SK-N-SH (cell line): ENCODE measurements at regions of chr5 and their contacts with region 1.

Region 1: DNA sequence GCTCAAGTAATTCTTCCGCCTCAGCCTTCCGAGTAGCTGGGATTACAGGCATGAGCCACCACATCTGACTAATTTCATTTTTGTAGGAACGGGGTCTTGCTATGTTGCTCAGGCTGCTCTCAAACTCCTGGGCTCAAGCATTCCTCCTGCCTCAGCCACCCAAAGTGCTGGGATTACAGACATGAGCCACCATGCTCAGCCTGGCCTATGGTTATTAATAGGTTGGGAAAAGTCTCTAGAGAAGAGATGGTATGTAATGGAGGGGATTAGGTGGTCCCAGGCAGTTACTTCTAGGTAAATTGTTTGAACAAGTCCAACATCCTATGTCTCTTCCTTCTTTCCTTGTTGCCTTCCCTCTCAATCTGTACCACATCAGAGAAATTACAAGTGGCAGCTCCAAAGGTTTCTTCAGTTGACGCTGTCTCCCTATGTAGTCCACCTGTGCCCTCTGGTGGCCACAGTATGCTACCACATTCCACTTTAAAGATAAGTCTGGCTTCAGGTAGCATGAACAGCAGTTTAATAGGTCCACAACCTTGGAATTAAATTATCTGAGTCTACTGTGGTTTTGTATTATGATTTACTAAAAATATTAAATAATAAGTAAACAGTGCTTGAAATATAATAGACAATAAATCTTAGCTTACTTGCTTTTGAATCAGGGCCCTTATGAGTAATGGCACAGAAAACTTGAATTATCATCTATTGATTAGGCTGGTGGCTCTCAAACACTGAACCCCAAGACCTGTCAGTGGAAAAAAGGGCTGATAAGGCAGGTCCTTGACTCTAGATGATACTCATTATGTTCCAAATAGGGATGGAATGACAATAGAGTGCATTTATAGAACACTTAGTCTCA is 9.7 kb downstream of the TIGD6 start:
- DNase-seq: peak; percentile 67
- H3K4me3 ChIP-seq: peak overlapping the region in 1 of 2 experiments; percentile 28; a peak in 1 of 4 replicates
- H3K27ac ChIP-seq: no peak overlapping the region
- H3K4me1 ChIP-seq: peaks cover 9 to 10% of the 10 kb centered on the region in 2 experiments; a peak in 1 of 4 replicates
- H3K27me3 ChIP-seq: no peaks in the 10 kb centered on the region
- CTCF ChIP-seq: peak; percentile 96
- EP300 ChIP-seq: peak in 1 of 2 experiments; percentile 28; a peak in 1 of 4 replicates
- RAD21 ChIP-seq: peak; percentile 98

Region 2: DNA sequence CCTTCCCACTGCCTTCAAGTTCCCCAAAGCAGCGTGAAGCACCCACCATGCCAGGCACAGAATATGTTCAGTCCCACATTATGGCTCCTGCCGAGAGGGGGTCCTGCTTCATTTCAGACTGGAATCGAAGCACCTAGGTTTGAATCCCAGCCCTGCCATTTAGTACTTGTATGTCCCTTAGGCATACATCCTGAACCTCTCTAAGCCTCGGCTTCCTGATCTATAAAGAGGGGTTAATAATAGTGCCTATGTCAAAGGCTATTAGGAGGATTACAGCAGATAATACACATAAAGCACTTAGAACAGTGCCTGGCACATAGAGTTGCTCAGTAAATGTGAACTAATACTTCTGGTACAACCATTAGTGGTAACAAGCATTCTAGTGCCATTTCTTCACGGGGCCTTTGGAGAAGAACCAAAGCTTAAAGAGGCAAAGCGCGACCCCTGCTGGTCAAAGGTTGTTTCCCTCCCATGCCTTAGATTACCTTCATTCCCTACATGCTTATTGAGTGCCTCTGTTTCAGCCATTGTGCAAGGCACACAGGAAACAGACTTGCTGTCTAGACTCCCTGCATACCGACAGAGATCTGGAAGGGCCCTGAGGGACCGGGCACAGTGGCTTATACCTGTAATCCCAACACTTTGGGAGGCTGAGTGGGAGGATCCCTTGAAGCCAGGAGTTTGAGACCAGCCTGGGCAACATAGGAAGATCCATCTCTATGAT is 162.4 kb before region 1 on chr5:
- CTCF ChIA-PET with region 1: interaction called, 506 read pairs
- POLR2A ChIA-PET with region 1: no interaction called
- DNase-seq: peak; percentile 83
- H3K4me3 ChIP-seq: peak overlapping the region in 1 of 2 experiments; percentile 23; a peak in 1 of 4 replicates
- H3K27ac ChIP-seq: no peak overlapping the region
- H3K4me1 ChIP-seq: no peaks in the 10 kb centered on the region; a peak in 1 of 4 replicates
- H3K27me3 ChIP-seq: no peaks in the 10 kb centered on the region
- CTCF ChIP-seq: peak; percentile 91
- EP300 ChIP-seq: no peak
- RAD21 ChIP-seq: peak; percentile 95

Region 3: GRCh38 chr5:149960272-149961185 is 30.2 kb before region 1 on chr5 and contains the start of gene SLC26A2:
- CTCF ChIA-PET with region 1: interaction called, 71 read pairs
- POLR2A ChIA-PET with region 1: no interaction called
- DNase-seq: peak; percentile 96
- H3K4me3 ChIP-seq: peak within 1 kb of the TSS; percentile 73 to 77
- H3K27ac ChIP-seq: peak within 1 kb of the TSS; percentile 87 to 94
- H3K4me1 ChIP-seq: peaks cover 10 to 12% of the 10 kb centered on the region in 2 experiments; a peak in 3 of 4 replicates
- H3K27me3 ChIP-seq: no peaks in the 10 kb centered on the region
- CTCF ChIP-seq: no peak; the same call in 1 of the 2 replicates
- EP300 ChIP-seq: peak in 1 of 2 experiments; percentile 22; a peak in 1 of 4 replicates
- RAD21 ChIP-seq: no peak
- polyA plus RNA-seq, gene SLC26A2: 1.3 and 1.9 TPM in 2 replicates

Region 4: DNA sequence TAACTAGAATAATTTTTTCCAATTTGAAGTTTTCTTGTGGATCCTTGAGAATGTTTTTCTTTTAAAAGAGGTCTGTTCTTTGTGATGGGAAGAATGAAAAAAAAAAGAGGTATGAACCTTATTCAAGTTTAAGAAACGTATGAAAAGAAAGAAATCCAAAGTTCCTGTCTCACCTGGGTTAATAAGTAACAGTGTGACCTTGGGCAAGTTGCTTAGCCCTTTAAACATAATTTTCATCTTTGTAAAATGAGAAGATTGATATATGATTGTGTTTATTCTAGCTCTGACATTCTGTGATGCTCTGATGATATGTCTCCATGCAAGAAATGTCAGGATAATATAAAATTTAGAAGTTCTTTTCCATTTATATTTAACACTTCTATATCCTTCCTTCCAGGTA is 10.9 kb before region 1 on chr5:
- CTCF ChIA-PET with region 1: interaction called, 38 read pairs
- POLR2A ChIA-PET with region 1: no interaction called
- DNase-seq: no peak
- H3K4me3 ChIP-seq: no peak overlapping the region
- H3K27ac ChIP-seq: no peak overlapping the region
- H3K4me1 ChIP-seq: no peaks in the 10 kb centered on the region
- H3K27me3 ChIP-seq: no peaks in the 10 kb centered on the region
- CTCF ChIP-seq: no peak
- EP300 ChIP-seq: no peak
- RAD21 ChIP-seq: no peak